ENCODE measurements at regions of chr4 and their contacts with region 1.

Region 1: GRCh38 chr4:74189331-74190043 is 31.6 kb downstream of the MTHFD2L start:
- DNase-seq: no peak
- H3K4me3 ChIP-seq: no peak overlapping the region
- H3K27ac ChIP-seq: no peak overlapping the region
- H3K4me1 ChIP-seq: no peaks in the 10 kb centered on the region
- H3K27me3 ChIP-seq: no peaks in the 10 kb centered on the region
- CTCF ChIP-seq: peak in 2 of 3 experiments; percentile 38 to 49; a peak in 2 of 4 replicates
- EP300 ChIP-seq: no peak
- POLR2A ChIP-seq: no peak
- RAD21 ChIP-seq: peak; percentile 69 to 75

Region 2: DNA sequence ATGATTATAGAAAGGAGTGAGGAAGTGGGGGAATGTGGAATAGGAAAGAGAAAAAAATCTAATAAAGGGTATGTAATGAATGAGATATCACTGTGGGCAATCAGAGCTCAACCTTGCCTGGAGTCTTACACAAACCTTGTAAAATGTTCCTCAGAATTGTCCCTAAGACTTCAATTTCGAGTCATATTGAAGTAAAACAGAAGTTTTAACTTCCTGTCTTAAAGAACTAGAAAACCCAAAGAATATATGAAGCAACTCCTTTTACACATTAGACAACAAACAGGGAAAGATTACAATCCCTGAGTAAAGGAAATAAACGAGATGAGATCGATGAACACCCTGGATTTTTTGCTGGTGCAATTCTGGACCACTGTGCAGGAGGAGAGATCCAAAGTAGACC is 108.5 kb before region 1 on chr4:
- CTCF ChIA-PET with region 1: no interaction called
- POLR2A ChIA-PET with region 1: no interaction called
- DNase-seq: no peak
- H3K4me3 ChIP-seq: no peak overlapping the region
- H3K27ac ChIP-seq: no peak overlapping the region
- H3K4me1 ChIP-seq: 0 out of 7 replicates have a peak, but pooled peaks cover 0 to 2% (median 0%) of the 10 kb centered on the region in 4 experiments
- H3K27me3 ChIP-seq: no peaks in the 10 kb centered on the region
- CTCF ChIP-seq: no peak
- EP300 ChIP-seq: no peak
- POLR2A ChIP-seq: no peak
- RAD21 ChIP-seq: no peak

Region 3: DNA sequence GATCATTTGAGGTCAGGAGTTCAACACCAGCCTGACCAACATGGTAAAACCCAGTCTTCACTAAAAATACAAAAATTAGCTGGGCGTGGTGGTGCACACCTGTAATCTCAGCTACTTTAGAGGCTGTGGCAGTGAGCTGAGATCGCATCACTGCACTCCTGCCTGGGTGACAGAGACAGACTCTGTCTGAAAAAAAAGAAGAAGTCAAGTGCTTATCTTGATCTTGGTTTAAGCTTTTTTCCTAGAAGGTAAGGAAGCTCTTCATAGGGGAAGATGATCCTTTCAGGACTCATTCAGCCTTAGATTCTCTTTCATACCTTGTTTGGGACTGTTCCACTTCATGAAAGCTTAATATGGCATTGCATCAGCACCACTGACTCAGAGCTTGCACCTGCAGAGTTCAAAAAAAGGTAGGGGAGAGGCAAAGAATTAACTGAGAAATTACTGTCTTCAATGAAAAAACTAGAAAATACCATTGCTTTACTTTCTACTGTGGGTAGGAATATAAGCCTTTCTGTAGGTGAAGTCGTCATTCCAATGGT is 48.0 kb after region 1 on chr4:
- CTCF ChIA-PET with region 1: no interaction called
- POLR2A ChIA-PET with region 1: no interaction called
- DNase-seq: no peak
- H3K4me3 ChIP-seq: no peak overlapping the region
- H3K27ac ChIP-seq: no peak overlapping the region
- H3K4me1 ChIP-seq: no peaks in the 10 kb centered on the region
- H3K27me3 ChIP-seq: no peaks in the 10 kb centered on the region
- CTCF ChIP-seq: no peak
- EP300 ChIP-seq: no peak
- POLR2A ChIP-seq: no peak
- RAD21 ChIP-seq: no peak

Region 4: GRCh38 chr4:74267998-74268606 is 78.6 kb after region 1 on chr4:
- CTCF ChIA-PET with region 1: no interaction called
- POLR2A ChIA-PET with region 1: no interaction called
- DNase-seq: no peak
- H3K4me3 ChIP-seq: no peak overlapping the region
- H3K27ac ChIP-seq: no peak overlapping the region
- H3K4me1 ChIP-seq: no peaks in the 10 kb centered on the region
- H3K27me3 ChIP-seq: peaks cover 0 to 1% (median 0%) of the 10 kb centered on the region in 4 experiments; a peak in 1 of 7 replicates
- CTCF ChIP-seq: no peak
- EP300 ChIP-seq: no peak
- POLR2A ChIP-seq: no peak
- RAD21 ChIP-seq: no peak

Region 5: DNA sequence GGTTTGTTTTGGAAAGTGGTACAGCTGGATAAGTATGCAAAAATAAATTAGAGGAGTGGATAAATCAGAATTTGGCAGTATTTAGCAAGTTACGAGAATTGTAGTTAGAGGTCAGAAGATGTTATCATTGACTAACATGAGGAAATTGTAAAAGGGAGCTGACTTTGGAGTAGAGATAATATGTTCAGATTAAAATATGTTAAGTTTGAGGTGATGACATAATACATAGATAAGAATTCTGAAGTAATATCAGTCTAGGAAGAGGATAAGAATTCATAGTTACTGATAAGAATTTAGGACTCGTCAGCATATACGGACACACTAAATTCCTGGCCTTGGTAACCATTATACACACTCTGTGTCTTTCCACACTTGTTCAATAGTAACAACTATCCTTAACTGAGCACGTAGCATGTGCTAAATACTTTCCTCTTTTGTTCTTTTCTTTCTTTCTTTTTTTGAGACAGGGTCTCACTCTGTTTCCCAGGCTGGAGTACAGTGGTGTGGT is 114.7 kb after region 1 on chr4:
- CTCF ChIA-PET with region 1: interaction called, 18 read pairs
- POLR2A ChIA-PET with region 1: no interaction called
- DNase-seq: no peak
- H3K4me3 ChIP-seq: no peak overlapping the region
- H3K27ac ChIP-seq: no peak overlapping the region
- H3K4me1 ChIP-seq: no peaks in the 10 kb centered on the region
- H3K27me3 ChIP-seq: no peaks in the 10 kb centered on the region
- CTCF ChIP-seq: no peak
- EP300 ChIP-seq: no peak
- POLR2A ChIP-seq: no peak
- RAD21 ChIP-seq: no peak

Region 6: GRCh38 chr4:74311696-74312313 is 122.3 kb after region 1 on chr4:
- CTCF ChIA-PET with region 1: interaction called, 12 read pairs
- POLR2A ChIA-PET with region 1: no interaction called
- DNase-seq: no peak
- H3K4me3 ChIP-seq: no peak overlapping the region
- H3K27ac ChIP-seq: no peak overlapping the region
- H3K4me1 ChIP-seq: no peaks in the 10 kb centered on the region
- H3K27me3 ChIP-seq: no peaks in the 10 kb centered on the region
- CTCF ChIP-seq: peak in 2 of 3 experiments; percentile 56 to 61; a peak in 2 of 4 replicates
- EP300 ChIP-seq: no peak
- POLR2A ChIP-seq: no peak
- RAD21 ChIP-seq: peak; percentile 78

Region 7: DNA sequence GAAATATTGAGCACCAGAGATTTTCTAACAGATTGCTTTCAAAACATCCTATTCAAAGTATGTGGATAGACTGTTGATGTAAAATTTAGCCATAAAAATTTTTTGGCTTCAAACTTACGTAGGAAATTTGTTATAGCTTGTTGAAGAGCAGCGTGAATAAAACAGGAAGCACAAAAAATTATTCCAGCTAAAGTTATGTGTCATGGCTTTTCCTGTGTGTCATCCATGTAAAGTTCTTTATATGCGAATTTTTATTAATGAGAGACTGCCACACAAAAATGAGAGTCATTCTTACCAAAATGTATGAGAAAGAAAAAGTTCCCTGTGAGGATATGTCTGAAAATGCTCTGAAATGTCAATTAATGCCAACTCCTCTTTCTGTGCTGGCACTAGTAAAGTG is 138.3 kb after region 1 on chr4:
- CTCF ChIA-PET with region 1: no interaction called
- POLR2A ChIA-PET with region 1: no interaction called
- DNase-seq: no peak
- H3K4me3 ChIP-seq: no peak overlapping the region
- H3K27ac ChIP-seq: no peak overlapping the region
- H3K4me1 ChIP-seq: peaks cover 0 to 2% (median 0%) of the 10 kb centered on the region in 4 experiments; a peak in 1 of 7 replicates
- H3K27me3 ChIP-seq: no peaks in the 10 kb centered on the region
- CTCF ChIP-seq: no peak
- EP300 ChIP-seq: no peak
- POLR2A ChIP-seq: no peak
- RAD21 ChIP-seq: no peak